ENCODE measurements at regions of chr1 and their contacts with region 1.

Region 1: DNA sequence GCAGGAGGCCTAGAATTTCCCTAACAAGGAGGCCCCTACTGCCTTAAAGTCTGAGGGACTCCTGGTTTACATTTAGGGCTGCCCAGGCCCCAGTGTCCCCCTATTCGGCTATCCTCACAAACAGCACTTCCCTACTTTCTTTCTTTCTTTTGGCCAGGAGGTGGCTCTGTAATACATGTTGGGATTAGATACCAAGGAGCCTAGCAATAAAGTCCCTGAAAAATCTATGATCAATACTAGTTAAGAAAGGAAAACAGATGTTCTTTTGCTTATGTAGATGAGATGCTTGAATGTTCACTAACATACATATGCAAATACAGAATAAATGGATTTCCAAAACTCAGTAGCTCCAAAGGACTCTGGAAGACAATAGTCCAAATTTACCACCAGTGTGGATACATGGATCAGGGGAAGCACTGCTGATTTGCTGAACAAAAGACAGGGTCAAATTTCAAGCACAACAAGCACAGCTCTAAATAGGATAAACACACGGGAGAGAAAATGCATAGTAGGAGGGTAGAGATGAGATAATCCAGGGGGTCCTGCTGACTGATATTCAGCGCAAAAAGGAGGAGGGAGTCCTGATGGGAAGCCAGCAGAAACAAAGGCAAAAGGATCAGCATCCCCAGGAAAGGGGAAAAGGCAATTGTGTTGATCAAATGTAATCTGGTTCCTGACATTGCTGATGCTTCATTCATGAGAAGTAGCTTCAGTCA is 240.0 kb downstream of the NUF2 start:
- DNase-seq: peak in 1 of 2 experiments; percentile 9
- H3K4me3 ChIP-seq: no peak overlapping the region
- H3K4me3 Mint-ChIP-seq: no peak overlapping the region
- H3K27ac Mint-ChIP-seq: no peak overlapping the region
- H3K4me1 ChIP-seq: no peaks in the 10 kb centered on the region
- H3K4me1 Mint-ChIP-seq: no peaks in the 10 kb centered on the region
- H3K27me3 ChIP-seq: no peaks in the 10 kb centered on the region
- H3K27me3 Mint-ChIP-seq: no peaks in the 10 kb centered on the region
- CTCF ChIP-seq: peak; percentile 29 to 43

Region 2: GRCh38 chr1:163633366-163633765 is 71.6 kb after region 1 on chr1:
- CTCF ChIA-PET with region 1: no interaction called
- POLR2A ChIA-PET with region 1: no interaction called
- intact Hi-C with region 1: no loop called
- DNase-seq: no peak
- H3K4me3 ChIP-seq: no peak overlapping the region
- H3K4me3 Mint-ChIP-seq: no peak overlapping the region
- H3K27ac Mint-ChIP-seq: no peak overlapping the region
- H3K4me1 ChIP-seq: no peaks in the 10 kb centered on the region
- H3K4me1 Mint-ChIP-seq: no peaks in the 10 kb centered on the region
- H3K27me3 ChIP-seq: no peaks in the 10 kb centered on the region
- H3K27me3 Mint-ChIP-seq: peaks cover 3% of the 10 kb centered on the region
- CTCF ChIP-seq: no peak

Region 3: GRCh38 chr1:163701783-163702374 is 140.1 kb after region 1 on chr1:
- CTCF ChIA-PET with region 1: no interaction called
- POLR2A ChIA-PET with region 1: no interaction called
- intact Hi-C with region 1: loop called (anchors 1 kb)
- DNase-seq: no peak
- H3K4me3 ChIP-seq: no peak overlapping the region
- H3K4me3 Mint-ChIP-seq: no peak overlapping the region
- H3K27ac Mint-ChIP-seq: no peak overlapping the region
- H3K4me1 ChIP-seq: no peaks in the 10 kb centered on the region
- H3K4me1 Mint-ChIP-seq: no peaks in the 10 kb centered on the region
- H3K27me3 ChIP-seq: no peaks in the 10 kb centered on the region
- H3K27me3 Mint-ChIP-seq: no peaks in the 10 kb centered on the region
- CTCF ChIP-seq: no peak